ENCODE measurements at regions of chr10 and their contacts with region 1.

Region 1: GRCh38 chr10:111973306-111973705 is 210.3 kb downstream of the GPAM start:
- DNase-seq: no peak

Region 2: GRCh38 chr10:111996103-111996502 is 22.8 kb after region 1 on chr10:
- intact Hi-C with region 1: loop called in 1 of 2 experiments (anchors 1 kb)
- DNase-seq: no peak

Region 3: GRCh38 chr10:112160834-112161233 is 187.5 kb after region 1 on chr10:
- intact Hi-C with region 1: no loop called
- DNase-seq: no peak

Region 4: DNA sequence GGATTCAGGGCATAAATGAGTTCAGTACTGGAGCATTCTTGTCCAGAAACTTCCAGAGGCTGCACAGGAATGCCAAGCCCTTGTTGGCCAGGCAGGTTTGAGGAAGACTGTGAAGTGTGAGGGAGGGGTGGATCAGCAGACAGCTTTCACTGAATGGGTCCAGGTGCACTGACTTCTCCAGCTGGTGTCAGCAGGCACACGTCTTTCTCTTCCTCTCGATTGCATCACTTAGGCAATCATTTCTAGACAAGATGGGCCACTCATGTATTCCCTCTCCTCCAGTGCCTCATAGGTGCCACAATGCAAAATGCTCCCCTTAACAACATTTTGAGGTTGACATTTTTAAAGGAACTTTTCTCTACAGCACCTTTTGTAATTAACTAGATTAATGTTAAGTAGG is 1762.6 kb after region 1 on chr10:
- intact Hi-C with region 1: no loop called
- DNase-seq: no peak

Measured in posterior vena cava (tissue), 2 donors.